Activated CD8-positive, alpha-beta T cell treated with anti-CD3 and anti-CD28 coated beads for 36 hours (primary cell): ENCODE measurements at regions of chr3 and their contacts with region 1.

Region 1: DNA sequence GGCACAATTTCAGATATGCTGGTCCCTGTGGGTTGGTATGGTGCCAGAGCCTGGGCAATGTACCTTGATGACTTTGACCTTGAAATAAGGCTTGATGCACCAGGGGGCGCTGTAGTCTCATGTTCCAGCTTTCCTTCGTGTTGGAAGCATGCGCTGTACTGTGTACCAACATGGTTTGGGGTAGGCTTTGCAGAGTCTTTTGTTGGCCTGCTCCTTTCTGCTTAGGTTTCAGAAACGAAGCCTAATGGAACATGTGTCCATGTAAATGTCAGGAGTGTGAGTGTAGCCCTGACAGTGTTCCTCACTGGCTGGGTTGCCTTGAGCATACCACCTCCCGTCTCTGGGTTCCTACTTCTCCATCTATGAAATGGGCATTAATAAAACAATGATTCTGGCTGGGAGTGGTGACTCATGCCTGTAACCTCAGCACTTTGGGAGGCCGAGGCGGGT is 3.6 kb upstream of the CCR4 start:
- DNase-seq: peak; percentile 99
- ATAC-seq: peak; percentile 74
- H3K4me3 Mint-ChIP-seq: no peak overlapping the region
- H3K27ac Mint-ChIP-seq: peak overlapping the region; percentile 25
- H3K4me1 Mint-ChIP-seq: peaks cover 42% of the 10 kb centered on the region
- H3K27me3 Mint-ChIP-seq: no peaks in the 10 kb centered on the region
- CTCF ChIP-seq: peak; percentile 80

Region 2: DNA sequence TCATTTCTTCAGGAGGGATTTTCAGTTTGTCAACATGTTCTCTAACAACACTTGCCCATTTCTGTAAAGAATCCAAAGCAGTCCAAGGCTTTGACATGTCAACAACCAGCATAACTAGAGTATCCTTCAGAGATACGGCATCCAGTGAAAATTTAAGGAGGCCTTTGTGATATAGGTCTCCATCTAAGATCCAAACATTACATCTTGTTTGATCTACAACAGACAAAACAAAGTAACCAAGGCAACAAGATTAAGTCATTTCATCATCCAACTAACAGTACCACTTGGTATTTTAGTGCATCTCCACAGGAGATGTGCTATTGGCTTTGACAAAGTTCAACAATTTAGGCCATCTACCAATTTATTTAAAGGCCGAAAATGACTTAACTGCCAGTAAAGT is 402.9 kb before region 1 on chr3:
- CTCF ChIA-PET with region 1: no interaction called
- POLR2A ChIA-PET with region 1: no interaction called
- intact Hi-C with region 1: no loop called
- DNase-seq: no peak
- ATAC-seq: no peak
- H3K4me3 Mint-ChIP-seq: no peak overlapping the region
- H3K27ac Mint-ChIP-seq: peak overlapping the region; percentile 3
- H3K4me1 Mint-ChIP-seq: peaks cover 16% of the 10 kb centered on the region
- H3K27me3 Mint-ChIP-seq: no peaks in the 10 kb centered on the region
- CTCF ChIP-seq: no peak

Region 3: GRCh38 chr3:32872487-32873382 is 75.1 kb before region 1 on chr3:
- CTCF ChIA-PET with region 1: no interaction called
- POLR2A ChIA-PET with region 1: no interaction called
- intact Hi-C with region 1: no loop called
- DNase-seq: no peak
- ATAC-seq: no peak
- H3K4me3 Mint-ChIP-seq: no peak overlapping the region
- H3K27ac Mint-ChIP-seq: no peak overlapping the region
- H3K4me1 Mint-ChIP-seq: no peaks in the 10 kb centered on the region
- H3K27me3 Mint-ChIP-seq: peaks cover 3% of the 10 kb centered on the region
- CTCF ChIP-seq: no peak

Region 4: GRCh38 chr3:33023172-33024136 is 75.6 kb after region 1 on chr3:
- CTCF ChIA-PET with region 1: interaction called, 9 read pairs
- POLR2A ChIA-PET with region 1: interaction called, 3 read pairs
- intact Hi-C with region 1: loop called (anchors 2 kb)
- DNase-seq: peak; percentile 33
- ATAC-seq: peak; percentile 86
- H3K4me3 Mint-ChIP-seq: peak overlapping the region; percentile 38
- H3K27ac Mint-ChIP-seq: peak overlapping the region; percentile 95
- H3K4me1 Mint-ChIP-seq: peaks cover 49% of the 10 kb centered on the region
- H3K27me3 Mint-ChIP-seq: no peaks in the 10 kb centered on the region
- CTCF ChIP-seq: peak; percentile 32

Region 5: DNA sequence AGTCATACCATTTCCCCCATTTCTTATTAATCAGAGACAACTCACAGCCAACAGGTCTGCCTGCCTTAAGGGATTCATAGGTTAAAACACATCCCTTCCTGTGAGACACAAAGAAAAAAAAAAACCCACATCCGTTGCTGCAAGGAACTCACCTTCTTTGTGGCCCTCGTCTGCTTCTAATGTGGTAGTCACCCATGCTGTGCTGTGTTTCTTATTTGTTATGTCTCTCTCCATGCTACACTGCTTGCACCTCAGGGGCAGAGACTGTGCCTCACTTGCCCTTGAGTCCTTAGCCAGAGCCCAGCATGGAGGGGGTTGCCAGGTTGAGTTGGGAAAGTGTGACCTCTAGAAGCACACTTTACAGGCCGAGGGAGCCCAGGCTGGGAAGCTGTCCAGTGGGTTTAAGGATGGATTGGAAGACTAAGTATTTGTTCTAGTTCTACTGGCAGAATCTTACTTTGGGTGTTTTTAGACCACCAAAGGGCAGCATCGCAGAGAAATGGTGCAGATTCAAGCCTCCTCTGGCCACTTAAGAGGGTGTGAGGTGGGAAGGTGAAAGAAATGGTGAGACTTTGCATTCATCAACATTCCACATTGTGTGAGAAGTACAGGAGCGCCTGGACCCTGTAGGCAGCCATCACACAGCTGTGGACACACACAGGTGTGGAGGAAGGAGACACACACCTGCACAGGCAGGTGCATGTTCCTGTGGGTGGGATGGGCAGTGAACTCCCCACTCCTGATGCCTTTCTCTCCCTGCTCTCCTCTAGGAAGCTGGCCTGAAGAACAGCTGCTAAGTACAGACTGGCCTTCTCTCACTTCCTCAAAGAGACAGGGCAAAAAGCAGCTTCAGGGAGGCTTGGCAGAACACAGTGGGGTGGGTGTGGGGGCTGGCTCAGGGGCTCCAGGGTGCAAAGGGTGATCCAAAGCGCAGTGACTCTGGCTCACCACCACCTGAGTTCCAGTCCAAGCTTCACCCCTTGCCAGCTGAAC is 100.3 kb after region 1 on chr3:
- CTCF ChIA-PET with region 1: interaction called, 10 read pairs
- POLR2A ChIA-PET with region 1: no interaction called
- intact Hi-C with region 1: no loop called
- DNase-seq: peak; percentile 74
- ATAC-seq: peak; percentile 86
- H3K4me3 Mint-ChIP-seq: peak overlapping the region; percentile 21
- H3K27ac Mint-ChIP-seq: peak overlapping the region; percentile 93
- H3K4me1 Mint-ChIP-seq: peaks cover 66% of the 10 kb centered on the region
- H3K27me3 Mint-ChIP-seq: no peaks in the 10 kb centered on the region
- CTCF ChIP-seq: no peak

Region 6: DNA sequence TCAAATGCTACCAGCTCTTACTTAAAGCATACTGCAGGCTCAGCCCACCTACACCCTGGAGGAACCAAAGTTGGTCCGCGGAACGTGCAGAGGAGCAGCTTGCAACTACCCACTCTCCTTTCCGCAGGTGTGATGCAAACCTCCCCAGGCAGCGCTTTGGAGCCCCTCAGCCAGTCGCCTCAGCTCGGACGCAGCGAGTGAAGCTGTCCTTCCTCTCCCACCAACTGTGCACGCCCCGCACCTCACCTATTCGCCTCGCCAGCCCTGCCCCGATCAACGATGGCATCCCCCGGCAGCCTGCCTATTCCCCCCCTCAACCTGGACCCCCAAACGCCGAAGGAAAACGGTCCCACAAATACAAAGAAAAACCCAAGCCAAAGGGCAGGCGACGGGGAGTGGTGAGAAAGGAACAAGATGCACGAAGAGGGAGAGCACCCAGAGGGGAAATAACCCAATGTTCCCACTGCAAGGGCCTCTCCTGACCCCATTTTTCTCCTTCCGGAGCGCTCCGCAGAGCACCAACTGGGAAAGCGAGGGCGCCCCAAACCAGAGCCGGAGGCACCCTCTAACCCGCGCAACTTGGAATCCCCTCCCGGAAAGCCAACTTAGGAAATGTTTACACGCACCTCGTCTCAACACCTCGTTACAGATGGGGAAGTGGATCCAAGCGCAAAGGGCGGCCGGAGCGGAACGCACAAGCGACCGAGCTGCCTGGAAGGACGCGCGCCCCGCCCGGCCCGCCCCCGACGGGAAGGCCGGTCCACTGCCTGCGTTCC is 148.5 kb after region 1 on chr3:
- CTCF ChIA-PET with region 1: interaction called, 18 read pairs
- POLR2A ChIA-PET with region 1: no interaction called
- intact Hi-C with region 1: no loop called
- DNase-seq: peak; percentile 64
- ATAC-seq: peak; percentile 41
- H3K4me3 Mint-ChIP-seq: peak overlapping the region; percentile 97
- H3K27ac Mint-ChIP-seq: peak overlapping the region; percentile 87
- H3K4me1 Mint-ChIP-seq: peaks cover 33% of the 10 kb centered on the region
- H3K27me3 Mint-ChIP-seq: peaks cover 1% of the 10 kb centered on the region
- CTCF ChIP-seq: no peak

Region 7: DNA sequence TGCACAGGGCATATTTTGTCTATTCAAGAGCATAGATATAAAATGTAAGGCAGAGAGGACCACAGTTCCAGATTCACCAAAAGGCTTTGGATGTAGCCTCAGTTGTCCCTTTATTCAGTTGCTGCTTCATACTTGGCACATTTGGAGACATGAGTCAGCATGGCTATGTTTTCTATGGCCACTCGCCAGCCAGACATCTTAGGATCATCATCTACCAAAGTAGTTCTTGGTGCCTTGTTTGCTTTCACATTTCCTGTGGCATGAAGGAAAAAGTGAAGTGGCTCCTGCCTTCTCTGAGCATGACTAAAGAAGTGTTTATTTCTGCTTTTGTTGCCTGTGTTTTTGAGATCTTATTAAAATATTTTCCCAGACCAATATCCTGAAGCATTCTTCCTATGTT is 263.6 kb after region 1 on chr3:
- CTCF ChIA-PET with region 1: no interaction called
- POLR2A ChIA-PET with region 1: no interaction called
- intact Hi-C with region 1: no loop called
- DNase-seq: no peak
- ATAC-seq: no peak
- H3K4me3 Mint-ChIP-seq: no peak overlapping the region
- H3K27ac Mint-ChIP-seq: no peak overlapping the region
- H3K4me1 Mint-ChIP-seq: no peaks in the 10 kb centered on the region
- H3K27me3 Mint-ChIP-seq: peaks cover 23% of the 10 kb centered on the region
- CTCF ChIP-seq: no peak